Activated B cell treated with CpG ODN at 0.5 μM for 24 hours (primary cell): ENCODE measurements at regions of chr4 and their contacts with region 1.

Region 1: GRCh38 chr4:42627885-42628646 is 28.8 kb downstream of the ATP8A1 start:
- DNase-seq: peak; percentile 57
- ATAC-seq: peak; percentile 91
- H3K4me3 Mint-ChIP-seq: peak overlapping the region; percentile 74
- H3K27ac Mint-ChIP-seq: peak overlapping the region; percentile 95
- H3K4me1 Mint-ChIP-seq: peaks cover 90% of the 10 kb centered on the region
- H3K27me3 Mint-ChIP-seq: no peaks in the 10 kb centered on the region
- CTCF ChIP-seq: no peak

Region 2: DNA sequence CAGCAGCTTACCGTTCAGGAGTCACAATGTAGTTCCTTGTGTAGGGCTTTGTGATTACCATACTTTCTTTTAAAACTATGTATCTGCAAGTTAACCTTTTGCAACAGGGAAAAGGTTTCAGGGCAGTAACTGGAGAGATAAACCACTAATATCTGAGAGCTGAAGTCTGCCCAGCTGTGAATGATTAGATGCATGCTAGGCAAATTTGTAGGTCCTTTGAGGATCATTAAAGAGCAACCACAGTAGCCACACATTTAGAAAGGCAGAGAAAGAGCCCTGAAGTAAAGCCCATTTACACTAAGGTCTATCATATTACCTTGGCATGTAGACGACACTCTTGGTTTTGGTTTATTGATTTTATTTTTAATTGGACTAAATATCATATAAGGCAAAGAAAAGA is 31.1 kb before region 1 on chr4:
- CTCF ChIA-PET with region 1: no interaction called
- POLR2A ChIA-PET with region 1: no interaction called
- intact Hi-C with region 1: loop called (anchors 2 kb)
- DNase-seq: no peak
- ATAC-seq: peak; percentile 18
- H3K4me3 Mint-ChIP-seq: no peak overlapping the region
- H3K27ac Mint-ChIP-seq: no peak overlapping the region
- H3K4me1 Mint-ChIP-seq: peaks cover 9% of the 10 kb centered on the region
- H3K27me3 Mint-ChIP-seq: no peaks in the 10 kb centered on the region
- CTCF ChIP-seq: no peak

Region 3: GRCh38 chr4:42638993-42639392 is 10.9 kb after region 1 on chr4:
- CTCF ChIA-PET with region 1: interaction called, 7 read pairs
- POLR2A ChIA-PET with region 1: interaction called, 20 read pairs
- intact Hi-C with region 1: loop called (anchors 1 kb)
- DNase-seq: no peak
- ATAC-seq: peak; percentile 3
- H3K4me3 Mint-ChIP-seq: peak overlapping the region; percentile 76
- H3K27ac Mint-ChIP-seq: peak overlapping the region; percentile 92
- H3K4me1 Mint-ChIP-seq: peaks cover 95% of the 10 kb centered on the region
- H3K27me3 Mint-ChIP-seq: no peaks in the 10 kb centered on the region
- CTCF ChIP-seq: no peak

Region 4: GRCh38 chr4:42824278-42824970 is 196.4 kb after region 1 on chr4:
- CTCF ChIA-PET with region 1: no interaction called
- POLR2A ChIA-PET with region 1: no interaction called
- intact Hi-C with region 1: no loop called
- DNase-seq: no peak
- ATAC-seq: no peak
- H3K4me3 Mint-ChIP-seq: no peak overlapping the region
- H3K27ac Mint-ChIP-seq: no peak overlapping the region
- H3K4me1 Mint-ChIP-seq: no peaks in the 10 kb centered on the region
- H3K27me3 Mint-ChIP-seq: peaks cover 6% of the 10 kb centered on the region
- CTCF ChIP-seq: no peak